Activated T-helper 1 cell treated with anti-CD3 and anti-CD28 coated beads, Interleukin-12 subunit alpha, Interleukin-12 subunit beta, Interleukin-2, Interleukin-4 antibody, amounts not matched to agents 30 ng/mL and 10 ng/mL and 1 ng/mL, durations not matched to agents 14 hours and 24 hours and 36 hours (primary cell): ENCODE measurements at regions of chr7 and their contacts with region 1.

Region 1: DNA sequence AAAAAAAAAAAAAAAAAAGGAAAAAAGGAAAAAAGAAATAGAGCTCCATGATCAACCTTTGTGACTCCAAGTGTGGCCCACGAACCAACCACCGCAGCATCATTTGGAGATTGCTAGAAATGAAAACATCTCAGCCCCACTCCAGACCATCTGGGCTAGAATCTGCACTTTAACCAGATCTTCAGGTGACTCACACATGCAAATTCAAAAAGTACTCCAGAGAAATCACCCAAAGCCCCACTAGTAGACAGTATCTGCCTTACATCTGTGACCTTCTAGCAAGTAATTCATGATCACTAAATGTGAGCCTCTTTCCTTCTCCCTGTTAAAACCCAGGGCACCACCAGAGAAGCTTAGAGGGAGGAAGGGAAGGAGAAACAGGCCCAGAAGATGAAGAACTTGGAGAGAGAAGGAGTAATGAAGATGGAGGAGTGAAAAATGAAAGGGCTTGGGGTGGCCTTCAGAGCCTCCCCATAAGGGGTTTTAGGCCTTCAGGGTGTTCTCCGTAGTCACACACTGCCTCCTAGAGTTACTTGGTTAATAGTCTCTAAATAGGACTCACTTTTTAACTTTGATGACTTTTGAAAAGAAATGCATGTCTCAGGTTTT is 94.0 kb downstream of the SLC37A3 start:
- DNase-seq: peak; percentile 27
- H3K4me3 Mint-ChIP-seq: no peak overlapping the region
- H3K27ac Mint-ChIP-seq: peak overlapping the region; percentile 78
- H3K4me1 Mint-ChIP-seq: peaks cover 21% of the 10 kb centered on the region
- H3K27me3 Mint-ChIP-seq: no peaks in the 10 kb centered on the region

Region 2: DNA sequence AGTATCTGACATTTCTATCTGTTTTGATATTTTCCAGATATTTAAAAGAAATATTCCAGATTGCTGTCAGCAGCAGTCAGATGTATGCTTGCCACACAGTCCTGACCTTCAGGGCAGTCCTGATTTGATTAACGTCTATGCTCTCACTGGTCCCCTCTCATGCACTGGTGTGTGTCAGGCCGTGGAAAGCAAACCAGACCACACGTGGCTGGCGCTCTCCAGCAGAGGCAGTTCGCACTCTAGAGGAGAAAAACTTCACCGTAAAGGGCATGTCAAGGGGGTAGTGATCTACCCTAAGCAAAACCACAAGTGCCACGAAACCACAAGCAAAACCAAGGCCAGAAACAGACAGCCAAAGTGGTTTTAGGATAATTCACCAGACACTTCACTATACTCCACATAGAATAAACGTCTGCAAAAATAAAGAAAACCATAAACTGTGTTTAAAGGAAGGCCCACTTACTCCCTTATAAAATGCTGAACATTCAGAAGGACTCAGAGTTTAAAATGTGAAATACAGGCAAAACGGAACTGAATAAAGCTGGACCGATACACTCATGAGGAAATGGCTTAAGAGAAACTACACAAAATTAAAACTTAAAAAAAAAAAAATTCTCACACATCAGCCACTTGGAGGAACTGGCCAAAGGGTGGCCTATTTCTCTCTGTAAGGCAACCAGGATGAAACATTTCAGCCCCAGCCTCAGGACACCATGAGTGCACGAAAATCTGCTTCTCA is 267.9 kb before region 1 on chr7:
- intact Hi-C with region 1: no loop called
- DNase-seq: no peak
- H3K4me3 Mint-ChIP-seq: no peak overlapping the region
- H3K27ac Mint-ChIP-seq: no peak overlapping the region
- H3K4me1 Mint-ChIP-seq: peaks cover 53% of the 10 kb centered on the region
- H3K27me3 Mint-ChIP-seq: no peaks in the 10 kb centered on the region

Region 3: GRCh38 chr7:140126435-140127034 is 177.8 kb before region 1 on chr7:
- intact Hi-C with region 1: loop called (anchors 5 kb)
- DNase-seq: no peak
- H3K4me3 Mint-ChIP-seq: peak overlapping the region; percentile 53
- H3K27ac Mint-ChIP-seq: peak overlapping the region; percentile 90
- H3K4me1 Mint-ChIP-seq: peaks cover 38% of the 10 kb centered on the region
- H3K27me3 Mint-ChIP-seq: no peaks in the 10 kb centered on the region